ENCODE measurements at regions of chr5 and their contacts with region 1.

Region 1: GRCh38 chr5:140710899-140711552 is 10.8 kb downstream of the ZMAT2 start:
- DNase-seq: peak; percentile 98
- ATAC-seq: peak; percentile 85
- H3K4me3 ChIP-seq: peak overlapping the region; percentile 27 to 51
- H3K27ac ChIP-seq: peak overlapping the region; percentile 63
- H3K4me1 ChIP-seq: peaks cover 14 to 38% of the 10 kb centered on the region in 2 experiments
- H3K27me3 ChIP-seq: no peaks in the 10 kb centered on the region
- CTCF ChIP-seq: no peak
- POLR2A ChIP-seq: no peak
- RAD21 ChIP-seq: no peak

Region 2: DNA sequence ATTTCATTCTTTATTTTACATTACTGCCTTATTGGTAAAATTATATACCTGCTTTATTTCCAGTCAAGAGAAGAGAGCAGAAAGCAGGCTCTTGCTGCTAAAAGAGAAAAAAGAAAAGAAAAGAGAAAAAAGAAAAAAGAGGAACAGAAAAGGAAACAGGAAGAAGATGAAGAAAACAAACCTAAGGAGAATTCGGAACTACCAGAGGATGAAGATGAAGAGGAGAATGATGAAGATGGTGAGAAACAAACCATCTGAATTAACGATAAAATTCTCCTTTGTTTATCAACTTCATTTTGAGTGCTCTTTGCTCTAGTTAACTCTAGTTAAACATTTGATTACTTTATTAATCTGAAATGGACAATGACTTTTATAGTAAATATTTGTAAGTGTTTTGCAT is 187.0 kb before region 1 on chr5:
- CTCF ChIA-PET with region 1: no interaction called
- POLR2A ChIA-PET with region 1: no interaction called
- RAD21 ChIA-PET with region 1: no interaction called
- intact Hi-C with region 1: no loop called
- DNase-seq: no peak
- ATAC-seq: no peak
- H3K4me3 ChIP-seq: no peak overlapping the region
- H3K27ac ChIP-seq: no peak overlapping the region
- H3K4me1 ChIP-seq: no peaks in the 10 kb centered on the region
- H3K27me3 ChIP-seq: no peaks in the 10 kb centered on the region
- CTCF ChIP-seq: no peak
- POLR2A ChIP-seq: no peak
- RAD21 ChIP-seq: no peak

Region 3: GRCh38 chr5:140557136-140557805 is 153.8 kb before region 1 on chr5 and contains the start of gene SRA1:
- CTCF ChIA-PET with region 1: no interaction called
- POLR2A ChIA-PET with region 1: no interaction called
- RAD21 ChIA-PET with region 1: no interaction called
- intact Hi-C with region 1: loop called (anchors 5 kb)
- DNase-seq: peak; percentile 79
- ATAC-seq: peak; percentile 94
- H3K4me3 ChIP-seq: peak within 1 kb of the TSS; percentile 82 to 85
- H3K27ac ChIP-seq: peak within 1 kb of the TSS; percentile 80
- H3K4me1 ChIP-seq: peaks cover 8 to 32% of the 10 kb centered on the region in 2 experiments
- H3K27me3 ChIP-seq: no peaks in the 10 kb centered on the region
- CTCF ChIP-seq: no peak
- POLR2A ChIP-seq: peak; percentile 91
- RAD21 ChIP-seq: no peak
- total RNA-seq, gene SRA1: 41.7 TPM

Region 4: DNA sequence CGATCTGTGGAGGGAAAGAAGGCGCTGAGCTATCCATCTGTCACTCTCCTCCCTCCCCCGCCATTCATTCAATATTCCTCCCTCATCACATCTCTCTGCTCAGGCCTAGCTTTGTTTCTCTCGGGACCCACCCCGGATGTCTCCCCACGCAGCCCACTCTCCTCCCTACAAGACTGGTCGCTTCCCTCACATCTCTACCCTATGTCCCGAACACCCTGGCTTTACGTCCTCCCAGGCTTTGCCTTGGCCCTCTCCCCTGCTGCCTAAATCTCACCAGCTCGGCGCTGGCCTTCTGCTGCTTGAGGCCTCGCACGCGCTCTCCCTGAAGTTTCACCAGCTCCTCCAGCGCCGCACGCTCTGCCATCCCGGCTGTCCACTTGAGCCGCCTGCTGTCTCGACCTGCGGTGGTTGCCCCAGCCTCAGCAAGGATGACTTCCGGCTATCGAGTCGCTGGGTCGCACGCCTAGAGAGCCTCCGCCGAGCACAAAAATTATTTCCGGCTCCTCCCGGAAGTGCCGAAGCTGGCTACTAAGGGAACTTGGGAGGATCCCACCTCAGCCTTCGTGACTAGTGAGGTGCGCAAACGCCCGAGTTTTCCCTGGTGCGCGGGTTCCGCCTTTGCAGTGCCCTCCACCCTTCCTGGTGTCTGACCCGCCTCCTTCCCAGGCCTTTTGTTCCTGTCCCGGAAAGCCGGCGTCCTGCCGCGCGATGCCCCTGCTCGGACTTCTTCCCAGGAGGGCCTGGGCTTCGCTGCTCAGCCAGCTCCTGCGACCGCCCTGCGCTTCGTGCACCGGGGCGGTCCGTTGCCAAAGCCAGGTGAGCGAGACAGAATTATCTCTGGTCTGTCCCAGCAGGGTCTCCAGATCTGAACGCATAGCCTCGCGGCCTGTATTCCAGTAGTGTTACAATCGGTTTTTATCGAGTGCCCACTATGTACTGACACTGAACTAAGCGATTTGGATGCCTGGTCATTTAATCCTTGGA is 19.8 kb before region 1 on chr5 and contains the starts of genes HARS1 and HARS2:
- CTCF ChIA-PET with region 1: no interaction called
- POLR2A ChIA-PET with region 1: interaction called, 12 read pairs
- RAD21 ChIA-PET with region 1: no interaction called
- intact Hi-C with region 1: no loop called
- DNase-seq: peak; percentile 97
- ATAC-seq: peak; percentile 96
- H3K4me3 ChIP-seq: peak within 1 kb of the TSS; percentile 78 to 94
- H3K27ac ChIP-seq: peak within 1 kb of the TSS; percentile 90
- H3K4me1 ChIP-seq: peaks cover 0 to 9% of the 10 kb centered on the region in 2 experiments; a peak in 2 of 4 replicates
- H3K27me3 ChIP-seq: no peaks in the 10 kb centered on the region
- CTCF ChIP-seq: no peak
- POLR2A ChIP-seq: peak; percentile 94
- RAD21 ChIP-seq: no peak
- total RNA-seq, gene HARS1: 91.1 TPM
- total RNA-seq, gene HARS2: 38.8 TPM

Region 5: DNA sequence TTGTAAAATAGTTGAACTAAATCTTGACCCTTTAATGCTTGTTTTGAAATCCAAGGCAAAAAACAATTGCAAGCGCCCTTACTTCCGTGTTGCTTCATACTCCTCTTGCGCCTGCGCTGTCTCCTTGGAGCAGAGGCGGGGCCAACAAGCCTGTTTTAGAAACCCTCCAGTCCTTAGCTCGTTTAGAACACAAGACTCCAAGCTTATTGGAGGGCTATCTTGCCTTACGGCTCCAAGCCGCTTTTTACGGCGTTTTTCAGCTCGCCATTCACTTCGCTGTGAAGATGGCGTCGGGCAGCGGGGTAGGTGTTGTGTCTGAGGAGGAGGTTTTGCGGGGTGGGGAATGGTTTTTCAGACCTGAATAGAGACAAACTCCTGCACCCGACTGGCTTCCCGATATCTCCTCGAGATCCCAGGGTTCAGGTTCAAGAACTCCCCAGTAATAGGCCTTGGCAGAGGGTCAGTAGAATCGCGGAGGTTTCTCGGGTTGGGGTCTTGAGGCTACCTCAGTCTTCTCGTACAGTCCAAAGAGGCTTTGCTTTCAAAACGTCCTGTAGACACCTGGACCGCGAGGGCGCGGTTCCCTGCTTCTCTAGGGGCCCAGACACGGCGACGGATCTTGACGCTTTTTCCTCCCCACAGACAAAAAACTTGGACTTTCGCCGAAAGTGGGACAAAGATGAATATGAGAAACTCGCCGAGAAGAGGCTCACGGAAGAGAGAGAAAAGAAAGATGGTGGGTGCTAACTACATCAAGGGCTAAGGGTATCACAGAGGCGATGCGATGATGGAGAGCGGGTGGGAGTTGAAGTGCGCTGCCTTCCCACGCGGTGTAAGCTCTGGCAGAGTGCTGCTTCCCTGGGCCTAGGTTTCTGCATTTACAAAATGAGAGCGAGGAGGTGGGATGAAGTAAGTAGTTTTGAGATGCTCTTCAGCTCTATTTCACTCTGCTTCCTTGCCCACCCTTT is 10.6 kb before region 1 on chr5 and contains the start of gene ZMAT2:
- CTCF ChIA-PET with region 1: interaction called, 5 read pairs
- POLR2A ChIA-PET with region 1: interaction called, 13 read pairs
- RAD21 ChIA-PET with region 1: no interaction called
- intact Hi-C with region 1: loop called (anchors 1 kb)
- DNase-seq: peak; percentile 98
- ATAC-seq: peak; percentile 99
- H3K4me3 ChIP-seq: peak within 1 kb of the TSS; percentile 92
- H3K27ac ChIP-seq: peak within 1 kb of the TSS; percentile 54
- H3K4me1 ChIP-seq: peaks cover 3 to 12% of the 10 kb centered on the region in 2 experiments
- H3K27me3 ChIP-seq: no peaks in the 10 kb centered on the region
- CTCF ChIP-seq: no peak
- POLR2A ChIP-seq: no peak
- RAD21 ChIP-seq: no peak
- total RNA-seq, gene ZMAT2: 55.3 TPM